A673 (cell line): ENCODE measurements at regions of chr5 and their contacts with region 1.

Region 1: DNA sequence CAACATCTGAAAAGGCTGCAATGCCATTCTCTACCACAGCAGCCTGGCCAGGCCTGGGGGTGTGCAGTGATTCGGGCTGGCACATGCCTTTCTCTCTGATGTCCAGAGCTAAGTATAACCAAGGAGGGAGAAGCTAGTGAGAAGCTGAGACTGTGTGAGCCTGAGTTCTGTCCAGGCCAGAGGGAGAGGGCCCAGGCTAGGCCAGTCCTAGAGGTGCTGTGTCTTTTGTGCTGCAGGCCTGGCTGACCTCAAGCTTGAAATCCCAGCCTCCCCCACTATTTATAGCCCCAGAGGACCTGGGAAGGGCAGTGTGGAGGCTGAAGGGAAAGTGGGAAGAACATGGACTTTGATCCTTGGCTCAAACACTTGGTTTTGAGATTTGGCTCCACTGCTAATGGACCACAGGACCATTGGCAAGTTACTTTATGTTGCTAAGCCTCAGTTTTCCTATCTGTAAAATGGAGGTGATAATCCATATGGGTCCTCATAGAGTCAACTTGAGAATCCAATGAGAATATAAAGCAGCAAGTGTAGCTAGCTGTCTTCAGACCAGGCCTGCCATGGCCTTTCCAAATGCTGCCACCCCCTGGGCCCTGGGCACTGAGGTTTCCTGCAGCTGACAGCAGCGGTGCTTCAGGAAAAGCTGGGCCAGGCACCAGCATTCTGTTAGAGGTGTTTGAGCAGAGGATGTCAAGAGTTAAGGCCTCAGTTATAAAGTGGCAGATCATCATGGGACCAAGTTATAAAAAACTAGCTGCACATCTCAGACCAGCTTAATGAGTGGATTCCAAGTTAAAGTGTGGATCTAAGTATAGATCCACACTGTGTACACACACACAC is 21.1 kb downstream of the BNIP1 start:
- DNase-seq: no peak
- H3K4me3 ChIP-seq: no peak overlapping the region
- H3K27ac ChIP-seq: no peak overlapping the region
- H3K4me1 ChIP-seq: no peaks in the 10 kb centered on the region
- H3K27me3 ChIP-seq: no peaks in the 10 kb centered on the region
- CTCF ChIP-seq: no peak

Region 2: GRCh38 chr5:172788771-172789686 is 376.4 kb before region 1 on chr5:
- CTCF ChIA-PET with region 1: no interaction called
- POLR2A ChIA-PET with region 1: no interaction called
- intact Hi-C with region 1: no loop called
- DNase-seq: no peak
- H3K4me3 ChIP-seq: no peak overlapping the region
- H3K27ac ChIP-seq: no peak overlapping the region
- H3K4me1 ChIP-seq: no peaks in the 10 kb centered on the region
- H3K27me3 ChIP-seq: no peaks in the 10 kb centered on the region
- CTCF ChIP-seq: no peak

Region 3: DNA sequence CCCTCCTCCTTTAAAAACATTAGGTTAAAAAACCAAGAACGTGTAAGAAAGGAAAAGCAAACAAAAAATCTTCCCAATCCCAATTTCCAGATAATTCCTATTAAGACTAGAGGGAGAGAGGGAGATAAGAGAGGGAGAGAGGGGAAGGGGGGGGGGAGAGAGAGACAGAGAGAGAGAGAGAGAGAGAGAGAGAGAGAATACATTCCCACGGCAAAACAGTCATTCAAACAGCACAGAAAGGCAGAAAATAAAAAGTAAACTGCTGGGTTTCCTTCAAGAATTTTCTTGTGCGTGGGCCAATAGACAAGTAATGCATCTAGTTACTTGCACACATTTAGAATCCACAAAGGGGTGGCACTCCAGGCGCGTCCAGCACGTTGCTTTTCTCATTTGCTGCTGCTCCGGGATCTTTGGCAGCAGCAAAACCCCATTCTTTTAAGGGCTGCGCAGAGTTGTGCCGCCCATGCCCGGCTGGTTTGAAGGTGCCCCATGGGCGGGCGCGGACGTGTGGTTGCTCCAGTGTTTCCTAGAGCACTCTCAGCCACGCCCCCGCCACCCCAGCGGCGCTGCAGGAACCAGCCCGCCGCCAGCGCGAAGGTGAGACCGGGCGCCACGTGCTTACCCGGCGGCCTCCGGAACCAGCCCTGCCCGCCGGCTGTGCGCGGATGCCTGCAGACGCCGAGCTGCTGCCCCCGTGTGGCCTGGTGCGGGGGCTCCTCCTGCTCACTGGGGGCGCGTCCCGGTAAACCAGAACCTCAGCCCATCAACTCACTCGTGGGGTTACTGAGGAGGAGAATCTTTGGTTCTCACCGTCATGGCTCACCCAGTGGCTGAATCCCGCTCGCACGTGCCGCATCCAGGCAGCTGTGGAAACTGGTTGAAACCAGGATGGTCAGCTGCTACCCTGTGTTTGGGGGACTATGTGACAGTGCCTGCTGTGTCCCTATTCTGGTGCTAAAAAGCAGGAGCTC is 118.2 kb after region 1 on chr5:
- CTCF ChIA-PET with region 1: no interaction called
- POLR2A ChIA-PET with region 1: no interaction called
- intact Hi-C with region 1: loop called (anchors 5 kb)
- DNase-seq: peak; percentile 80
- H3K4me3 ChIP-seq: peak overlapping the region; percentile 17
- H3K27ac ChIP-seq: no peak overlapping the region
- H3K4me1 ChIP-seq: no peaks in the 10 kb centered on the region
- H3K27me3 ChIP-seq: no peaks in the 10 kb centered on the region
- CTCF ChIP-seq: peak; percentile 75

Region 4: GRCh38 chr5:173331956-173332479 is 166.6 kb after region 1 on chr5:
- CTCF ChIA-PET with region 1: no interaction called
- POLR2A ChIA-PET with region 1: no interaction called
- intact Hi-C with region 1: loop called (anchors 5 kb)
- DNase-seq: peak; percentile 85
- H3K4me3 ChIP-seq: no peak overlapping the region
- H3K27ac ChIP-seq: no peak overlapping the region
- H3K4me1 ChIP-seq: peaks cover 14% of the 10 kb centered on the region
- H3K27me3 ChIP-seq: no peaks in the 10 kb centered on the region
- CTCF ChIP-seq: peak; percentile 88